ENCODE measurements at regions of chr12 and their contacts with region 1.

Region 1: DNA sequence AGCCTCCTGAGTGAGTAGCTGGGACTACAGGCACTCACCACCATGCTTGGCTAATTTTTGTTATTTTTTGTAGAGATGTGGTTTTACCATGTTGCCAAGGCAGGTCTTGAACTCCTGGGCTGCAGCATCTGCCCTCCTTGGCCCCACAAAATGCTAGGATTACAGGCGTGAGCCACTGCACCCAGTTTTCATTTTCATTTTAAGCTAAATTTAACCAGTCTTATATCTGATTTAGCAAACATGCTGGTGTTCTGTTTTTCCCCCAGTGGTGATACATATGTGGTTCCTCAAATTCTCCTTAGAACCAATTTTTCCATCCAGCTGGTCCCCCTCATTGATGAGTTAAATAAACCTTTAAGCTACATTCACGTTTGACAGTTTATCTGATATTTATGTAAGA is 43.8 kb upstream of the BICD1 start:
- DNase-seq: no peak
- ATAC-seq: no peak
- H3K4me3 Mint-ChIP-seq: no peak overlapping the region
- H3K27ac Mint-ChIP-seq: no peak overlapping the region
- H3K4me1 Mint-ChIP-seq: peaks cover 10% of the 10 kb centered on the region
- H3K27me3 Mint-ChIP-seq: no peaks in the 10 kb centered on the region

Region 2: DNA sequence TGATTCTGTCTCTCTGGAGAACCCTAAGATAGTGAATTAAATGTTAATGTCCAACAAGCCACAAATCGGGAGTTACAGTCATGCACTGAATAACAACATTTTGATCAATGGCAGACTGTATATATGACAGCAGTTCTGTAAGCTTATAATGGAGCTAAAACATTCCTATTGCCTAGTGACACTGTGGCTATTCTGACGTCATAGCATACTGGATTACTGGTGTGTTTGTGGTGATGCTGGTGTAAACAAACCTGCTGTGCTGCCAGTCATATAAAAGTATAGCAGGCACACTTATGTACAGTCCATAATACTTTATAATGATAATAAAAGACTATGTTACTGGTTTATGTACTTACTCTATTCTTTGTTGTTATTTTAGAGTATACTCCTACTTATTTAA is 12.9 kb before region 1 on chr12:
- CTCF ChIA-PET with region 1: interaction called, 10 read pairs
- POLR2A ChIA-PET with region 1: no interaction called
- intact Hi-C with region 1: no loop called
- DNase-seq: no peak
- ATAC-seq: no peak
- H3K4me3 Mint-ChIP-seq: no peak overlapping the region
- H3K27ac Mint-ChIP-seq: no peak overlapping the region
- H3K4me1 Mint-ChIP-seq: peaks cover 8% of the 10 kb centered on the region
- H3K27me3 Mint-ChIP-seq: no peaks in the 10 kb centered on the region

Region 3: DNA sequence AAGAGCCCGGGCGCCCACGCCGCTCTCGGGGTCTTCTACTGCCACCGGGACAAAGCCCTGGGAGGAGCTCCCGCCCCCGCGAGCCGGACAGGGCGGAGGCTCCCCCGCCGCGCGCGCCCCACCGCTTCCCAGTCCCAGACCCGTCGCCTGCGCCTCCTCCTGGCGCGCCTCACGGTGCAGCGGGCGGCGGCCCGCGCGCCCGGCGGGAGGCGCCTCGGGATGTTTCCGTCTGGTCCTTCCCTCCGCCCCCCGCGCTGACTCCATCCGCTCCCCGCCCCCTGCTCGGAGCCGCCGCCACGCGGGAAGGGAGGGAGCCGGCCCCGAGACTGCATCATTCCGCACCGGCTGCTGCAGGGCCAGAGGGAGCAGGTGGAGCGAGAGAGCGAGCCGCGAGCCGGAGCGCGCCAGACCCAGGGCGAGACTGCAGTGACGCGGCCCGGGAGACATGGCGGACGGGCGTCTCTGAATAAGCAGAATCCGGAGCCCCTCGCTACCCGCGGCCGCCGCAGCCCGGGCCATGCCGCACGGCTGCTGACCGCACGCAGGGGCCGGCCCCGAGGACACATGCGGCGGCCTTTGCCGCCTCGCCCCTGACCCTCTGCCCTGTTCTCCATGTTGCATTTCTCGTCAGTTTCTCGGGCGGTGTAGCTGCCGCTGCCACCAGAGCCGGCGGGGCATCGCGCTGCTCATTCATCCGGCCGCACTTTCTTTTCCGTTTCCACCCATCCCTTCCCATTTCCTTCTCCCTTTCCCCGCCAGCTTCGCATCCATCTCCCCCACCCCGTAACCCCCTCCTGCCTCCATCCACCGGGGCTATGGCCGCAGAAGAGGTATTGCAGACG is 43.9 kb after region 1 on chr12 and contains the start of gene BICD1:
- CTCF ChIA-PET with region 1: interaction called, 5 read pairs
- POLR2A ChIA-PET with region 1: no interaction called
- intact Hi-C with region 1: loop called (anchors 2 to 5 kb)
- DNase-seq: peak; percentile 86
- ATAC-seq: peak; percentile 83
- H3K4me3 Mint-ChIP-seq: peak within 1 kb of the TSS; percentile 83
- H3K27ac Mint-ChIP-seq: peak within 1 kb of the TSS; percentile 92
- H3K4me1 Mint-ChIP-seq: peaks cover 20% of the 10 kb centered on the region
- H3K27me3 Mint-ChIP-seq: peaks cover 2% of the 10 kb centered on the region
- total RNA-seq, gene BICD1: 12.7 to 15.1 TPM

Region 4: DNA sequence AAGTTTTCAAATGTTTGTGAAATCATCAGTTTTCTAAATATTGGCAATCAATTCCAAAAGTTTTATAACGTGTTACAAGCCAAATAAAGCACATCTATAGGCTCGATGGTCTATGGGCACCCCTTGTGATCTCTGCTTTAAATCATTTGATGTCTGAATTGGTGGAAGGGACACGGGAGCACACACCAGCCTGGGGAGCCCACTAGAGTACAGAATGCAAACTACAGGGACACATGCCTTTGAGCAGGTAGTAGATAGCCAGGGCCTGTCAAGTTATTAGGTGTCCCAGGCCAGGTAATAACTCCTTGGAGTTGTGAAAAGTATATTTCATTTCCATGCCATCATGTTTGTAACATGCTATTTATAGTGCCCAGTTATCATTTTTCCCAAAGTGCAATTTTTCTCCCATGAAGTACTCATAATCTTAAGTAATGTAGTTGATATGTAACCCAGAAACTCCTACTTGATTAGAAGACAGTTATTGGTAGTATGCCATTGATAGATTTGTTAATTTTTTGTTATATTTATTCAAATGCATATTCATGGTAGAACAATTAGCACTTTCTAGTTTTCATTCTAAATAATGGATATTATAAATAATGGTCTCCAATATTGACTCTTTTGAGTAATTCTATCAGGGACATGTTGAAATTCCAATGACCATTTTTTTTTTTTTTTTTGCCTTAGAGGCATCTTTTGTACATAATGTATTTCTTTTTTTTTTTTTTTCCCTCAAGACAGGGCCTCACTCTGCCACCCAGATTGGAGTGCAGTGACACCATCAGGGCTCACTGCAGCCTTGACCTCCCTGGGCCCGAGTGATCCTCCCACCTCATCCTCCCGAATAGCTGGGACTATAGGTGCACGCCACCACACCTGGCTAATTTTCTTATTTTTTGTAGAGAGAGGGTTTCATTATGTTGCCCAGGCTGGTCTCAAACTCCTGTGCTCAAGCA is 239.6 kb after region 1 on chr12:
- CTCF ChIA-PET with region 1: interaction called, 7 read pairs
- POLR2A ChIA-PET with region 1: no interaction called
- intact Hi-C with region 1: loop called in 1 of 2 experiments (anchors 2 kb)
- DNase-seq: peak; percentile 37
- ATAC-seq: peak; percentile 66
- H3K4me3 Mint-ChIP-seq: no peak overlapping the region
- H3K27ac Mint-ChIP-seq: no peak overlapping the region
- H3K4me1 Mint-ChIP-seq: no peaks in the 10 kb centered on the region
- H3K27me3 Mint-ChIP-seq: no peaks in the 10 kb centered on the region

Region 5: DNA sequence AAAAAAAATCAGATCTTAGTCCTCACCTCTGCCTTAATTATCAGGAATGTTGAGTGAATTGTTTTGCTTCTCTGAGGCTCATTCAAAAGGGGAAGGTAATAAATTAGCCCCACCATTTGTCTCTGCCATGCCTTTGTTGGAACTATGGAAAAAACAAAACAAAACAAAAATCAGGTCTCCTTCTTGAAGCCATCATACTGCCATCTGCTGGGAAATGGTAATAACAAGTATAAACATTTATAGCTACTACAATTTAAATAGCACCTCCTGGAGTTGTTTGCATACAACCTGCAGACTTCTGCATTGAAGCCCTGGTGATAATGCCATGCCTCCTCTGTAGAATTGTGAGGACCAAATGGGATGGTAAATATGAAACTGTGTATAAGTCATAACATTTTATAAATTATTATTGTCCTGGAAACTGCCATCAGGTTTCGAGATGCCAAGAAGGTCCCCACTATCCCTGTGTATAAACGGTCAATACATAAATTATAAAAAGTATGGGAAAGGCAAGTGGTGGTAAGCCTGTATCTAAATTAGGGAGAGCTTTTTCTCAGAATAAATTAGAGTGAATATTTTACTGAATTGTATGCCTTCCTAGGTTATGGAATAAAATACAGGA is 249.3 kb after region 1 on chr12:
- CTCF ChIA-PET with region 1: interaction called, 13 read pairs
- POLR2A ChIA-PET with region 1: no interaction called
- intact Hi-C with region 1: loop called (anchors 1 kb)
- DNase-seq: no peak
- ATAC-seq: no peak
- H3K4me3 Mint-ChIP-seq: no peak overlapping the region
- H3K27ac Mint-ChIP-seq: no peak overlapping the region
- H3K4me1 Mint-ChIP-seq: peaks cover 2% of the 10 kb centered on the region
- H3K27me3 Mint-ChIP-seq: no peaks in the 10 kb centered on the region